Sciatic nerve (tissue), 2 donors: ENCODE measurements at regions of chr7 and their contacts with region 1.

Region 1: GRCh38 chr7:66150471-66150870 is 35.8 kb downstream of the CRCP start:
- DNase-seq: peak; percentile 84
- ATAC-seq: peak; percentile 82

Region 2: DNA sequence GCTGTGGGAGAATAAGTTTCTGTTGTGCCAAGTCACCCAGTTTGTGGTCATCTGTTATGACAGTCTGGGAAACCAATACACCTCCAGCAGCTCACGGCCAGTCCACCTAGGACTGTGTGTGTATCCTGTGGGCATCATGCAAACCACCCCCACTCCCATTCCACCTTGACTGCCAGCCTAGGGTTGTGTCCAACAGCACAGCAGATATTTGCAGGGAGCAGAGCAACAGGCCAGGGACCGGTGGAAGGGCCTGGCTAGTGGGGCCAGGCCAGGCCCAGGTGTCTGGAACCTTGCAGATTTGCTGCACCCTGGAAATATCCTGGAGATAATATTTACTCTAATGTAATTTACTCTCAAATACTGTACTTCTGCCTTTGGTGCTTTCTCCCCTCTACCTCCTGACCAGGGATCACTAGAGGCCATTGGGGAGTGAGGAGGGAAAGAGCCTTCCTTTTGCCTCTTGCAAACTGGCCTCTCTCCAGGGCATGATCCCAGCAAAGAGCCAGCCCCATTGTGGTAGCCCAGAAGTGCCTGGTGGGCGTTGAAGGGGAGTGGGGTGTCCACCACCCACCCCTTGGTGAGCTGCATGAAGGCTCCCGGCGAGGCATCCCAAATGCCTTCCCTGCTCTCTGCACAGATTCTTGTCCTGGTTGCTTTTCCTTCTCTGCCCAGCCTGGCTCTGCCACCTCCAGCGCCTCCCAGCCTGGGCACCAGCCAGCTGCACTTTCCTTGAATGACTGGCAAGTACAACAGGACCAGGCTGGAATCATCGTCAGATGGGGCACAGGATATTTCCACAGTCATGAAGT is 39.4 kb after region 1 on chr7:
- intact Hi-C with region 1: loop called (anchors 1 kb)
- DNase-seq: no peak
- ATAC-seq: no peak

Region 3: GRCh38 chr7:66886152-66886551 is 735.7 kb after region 1 on chr7:
- intact Hi-C with region 1: no loop called
- DNase-seq: no peak
- ATAC-seq: no peak

Region 4: GRCh38 chr7:67518580-67518979 is 1368.1 kb after region 1 on chr7:
- intact Hi-C with region 1: no loop called
- DNase-seq: no peak
- ATAC-seq: no peak